ENCODE measurements at regions of chr17 and their contacts with region 1.

Region 1: DNA sequence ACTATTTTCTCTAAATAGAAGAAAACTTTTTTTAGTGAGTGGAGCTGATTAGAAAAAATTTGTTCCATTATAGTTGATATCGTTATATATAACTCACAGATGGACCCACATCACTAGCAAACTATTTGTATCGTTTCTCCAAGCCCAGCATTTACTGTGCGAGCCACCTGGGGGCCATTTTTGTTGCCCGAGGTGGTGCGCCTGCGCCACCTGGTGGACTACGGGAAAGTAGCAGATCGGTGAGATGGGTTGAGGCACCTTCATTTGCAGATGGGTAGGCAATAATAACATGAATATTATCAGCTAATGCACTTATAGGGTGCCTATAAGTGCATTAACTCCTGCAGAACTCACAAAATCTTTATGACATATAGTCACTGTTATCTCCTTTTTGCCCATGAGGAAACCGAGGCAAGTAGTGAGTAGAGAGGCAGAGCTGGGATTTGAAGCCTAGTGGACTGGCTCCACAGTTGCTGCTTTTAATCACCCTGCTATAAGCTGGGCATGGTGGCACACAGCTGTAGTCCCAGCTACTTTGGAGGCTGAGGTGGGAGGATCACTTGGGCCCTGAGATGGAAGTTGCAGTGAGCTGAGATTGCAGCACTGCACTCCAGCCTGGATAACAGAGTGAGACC is 23.2 kb upstream of the NTN1 start:
- DNase-seq: peak; percentile 85
- H3K4me3 Mint-ChIP-seq: no peak overlapping the region
- H3K27ac Mint-ChIP-seq: no peak overlapping the region
- H3K4me1 Mint-ChIP-seq: peaks cover 5% of the 10 kb centered on the region
- H3K27me3 Mint-ChIP-seq: peaks cover 16% of the 10 kb centered on the region

Region 2: GRCh38 chr17:8785547-8786413 is 212.3 kb before region 1 on chr17:
- CTCF ChIA-PET with region 1: interaction called, 6 read pairs
- intact Hi-C with region 1: loop called (anchors 5 kb)
- DNase-seq: peak; percentile 83
- H3K4me3 Mint-ChIP-seq: no peak overlapping the region
- H3K27ac Mint-ChIP-seq: no peak overlapping the region
- H3K4me1 Mint-ChIP-seq: peaks cover 2% of the 10 kb centered on the region
- H3K27me3 Mint-ChIP-seq: no peaks in the 10 kb centered on the region

Region 3: DNA sequence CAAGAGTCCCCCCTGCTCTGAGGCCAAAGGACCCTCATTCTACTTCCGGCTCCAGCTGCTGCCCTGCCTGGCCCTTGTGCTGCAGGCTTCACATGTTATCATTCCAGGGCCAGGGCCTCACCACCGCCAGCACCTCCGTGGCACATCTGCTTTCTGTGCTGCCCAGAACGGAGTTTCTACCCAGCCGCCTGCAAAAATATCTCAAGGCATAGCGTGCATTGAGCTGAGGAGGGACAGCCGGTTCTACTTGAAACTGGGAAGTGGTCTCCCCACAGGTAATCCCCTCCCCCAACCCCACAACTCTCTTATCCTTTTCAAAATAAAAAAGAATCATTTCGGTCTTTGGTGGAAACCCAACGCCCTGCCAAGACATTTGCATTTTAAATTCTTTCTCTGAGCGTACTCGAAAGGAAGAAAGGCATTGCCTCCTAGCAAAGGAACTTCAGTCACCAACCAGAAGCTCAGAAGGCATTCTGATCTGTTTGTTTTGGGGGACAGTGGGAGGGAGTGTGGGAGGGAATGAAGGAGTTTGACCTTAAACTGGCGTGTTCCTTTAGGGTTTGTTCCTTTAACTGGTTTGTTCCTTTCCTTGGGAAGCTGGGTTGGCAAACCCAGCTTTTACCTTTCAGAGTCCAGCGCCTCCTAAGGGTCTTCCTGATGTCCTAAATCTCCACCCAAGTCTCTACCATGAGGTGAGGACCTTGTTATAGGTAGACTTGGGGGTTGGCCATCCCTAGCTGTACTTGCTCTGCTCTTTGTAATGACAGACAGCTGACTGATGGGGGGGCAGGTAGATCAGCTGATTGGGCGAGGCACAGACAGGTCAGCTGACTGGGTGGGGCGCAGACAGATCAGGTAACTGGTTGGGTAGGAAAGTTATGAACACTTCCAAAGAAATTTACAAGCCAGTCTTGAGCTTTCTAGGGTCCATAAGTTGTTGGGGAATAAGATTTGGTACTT is 97.2 kb before region 1 on chr17:
- CTCF ChIA-PET with region 1: interaction called, 20 read pairs
- intact Hi-C with region 1: no loop called
- DNase-seq: peak; percentile 58
- H3K4me3 Mint-ChIP-seq: no peak overlapping the region
- H3K27ac Mint-ChIP-seq: no peak overlapping the region
- H3K4me1 Mint-ChIP-seq: peaks cover 60% of the 10 kb centered on the region
- H3K27me3 Mint-ChIP-seq: no peaks in the 10 kb centered on the region

Region 4: DNA sequence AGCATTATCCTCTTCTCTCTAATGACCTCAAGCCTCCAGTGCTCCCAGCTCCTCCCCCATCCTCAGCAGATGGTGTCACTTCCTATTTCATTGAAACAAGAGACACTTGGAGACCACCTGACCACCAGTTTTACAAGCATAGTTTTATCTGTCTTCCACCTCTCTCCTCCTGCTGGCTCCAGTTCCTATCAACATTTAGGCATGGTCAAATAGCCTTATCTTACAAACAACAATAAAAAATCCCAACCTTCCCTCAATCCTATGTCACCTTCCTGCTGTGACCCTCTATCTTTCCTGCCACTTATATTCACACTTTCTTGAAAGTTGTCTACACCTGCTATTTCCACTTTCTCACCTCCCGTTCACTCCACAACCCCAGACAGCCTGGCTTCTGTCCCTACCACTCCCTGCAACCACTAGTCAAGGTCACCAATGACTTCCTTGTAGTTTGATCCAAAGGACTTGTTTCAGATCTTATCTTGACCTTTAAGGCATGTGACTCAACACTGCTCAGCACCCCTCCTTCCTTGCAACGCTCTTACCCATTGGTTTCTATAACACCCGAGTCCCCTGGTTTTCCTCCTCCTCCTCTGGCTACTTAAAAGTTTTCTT is 18.9 kb after region 1 on chr17:
- CTCF ChIA-PET with region 1: interaction called, 10 read pairs
- intact Hi-C with region 1: no loop called
- DNase-seq: no peak
- H3K4me3 Mint-ChIP-seq: no peak overlapping the region
- H3K27ac Mint-ChIP-seq: no peak overlapping the region
- H3K4me1 Mint-ChIP-seq: no peaks in the 10 kb centered on the region
- H3K27me3 Mint-ChIP-seq: peaks cover 32% of the 10 kb centered on the region